HCT116 (cell line): ENCODE measurements at regions of chr4 and their contacts with region 1.

Region 1: DNA sequence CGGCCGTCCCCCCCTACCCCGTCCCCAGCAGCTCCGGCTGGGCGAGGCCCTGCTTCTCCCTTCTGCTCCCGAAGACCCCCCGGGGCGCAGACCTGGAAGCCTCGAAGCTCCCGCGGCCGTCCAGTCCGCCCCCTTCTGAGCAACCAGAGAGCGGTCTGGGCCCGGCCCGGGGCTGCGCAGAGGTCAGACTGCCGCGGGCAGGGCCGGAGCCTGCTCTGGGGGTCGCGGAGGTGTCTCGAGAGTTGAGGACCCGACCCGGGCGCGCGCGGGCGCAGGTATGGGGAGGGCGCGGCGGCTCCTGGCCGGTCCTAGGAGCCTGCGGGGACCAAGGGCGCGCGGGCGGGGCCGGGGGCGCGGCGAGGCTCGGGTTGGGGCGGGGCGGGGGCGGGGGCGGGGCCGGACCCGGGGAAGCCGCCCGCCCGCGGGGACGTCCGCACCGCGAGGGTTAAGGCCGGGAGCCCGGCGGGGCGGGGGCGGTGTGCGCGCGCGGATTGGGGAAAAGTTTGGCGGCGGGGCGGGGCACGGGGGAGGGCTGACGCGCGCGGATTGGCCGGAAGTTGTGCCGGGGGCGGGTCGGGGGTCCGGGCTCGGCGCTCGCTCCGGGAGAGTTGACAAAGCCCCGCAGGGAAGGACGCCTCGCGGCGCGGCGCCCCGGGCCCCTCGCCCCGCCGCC is at the start of gene FGFRL1:
- DNase-seq: peak; percentile 73
- ATAC-seq: peak; percentile 69
- H3K4me3 ChIP-seq: peak within 1 kb of the TSS; percentile 70 to 75
- H3K27ac ChIP-seq: peak within 1 kb of the TSS; percentile 80
- H3K4me1 ChIP-seq: peaks cover 20 to 38% of the 10 kb centered on the region in 2 experiments
- H3K27me3 ChIP-seq: no peaks in the 10 kb centered on the region
- CTCF ChIP-seq: no peak
- POLR2A ChIP-seq: no peak
- RAD21 ChIP-seq: no peak
- total RNA-seq, gene FGFRL1: 91.1 TPM

Region 2: GRCh38 chr4:999882-1000425 is 11.2 kb before region 1 on chr4:
- CTCF ChIA-PET with region 1: no interaction called
- POLR2A ChIA-PET with region 1: no interaction called
- RAD21 ChIA-PET with region 1: no interaction called
- intact Hi-C with region 1: no loop called
- DNase-seq: no peak
- ATAC-seq: no peak
- H3K4me3 ChIP-seq: no peak overlapping the region
- H3K27ac ChIP-seq: no peak overlapping the region
- H3K4me1 ChIP-seq: no peaks in the 10 kb centered on the region; a peak in 1 of 4 replicates
- H3K27me3 ChIP-seq: no peaks in the 10 kb centered on the region
- CTCF ChIP-seq: no peak
- POLR2A ChIP-seq: no peak
- RAD21 ChIP-seq: no peak

Region 3: DNA sequence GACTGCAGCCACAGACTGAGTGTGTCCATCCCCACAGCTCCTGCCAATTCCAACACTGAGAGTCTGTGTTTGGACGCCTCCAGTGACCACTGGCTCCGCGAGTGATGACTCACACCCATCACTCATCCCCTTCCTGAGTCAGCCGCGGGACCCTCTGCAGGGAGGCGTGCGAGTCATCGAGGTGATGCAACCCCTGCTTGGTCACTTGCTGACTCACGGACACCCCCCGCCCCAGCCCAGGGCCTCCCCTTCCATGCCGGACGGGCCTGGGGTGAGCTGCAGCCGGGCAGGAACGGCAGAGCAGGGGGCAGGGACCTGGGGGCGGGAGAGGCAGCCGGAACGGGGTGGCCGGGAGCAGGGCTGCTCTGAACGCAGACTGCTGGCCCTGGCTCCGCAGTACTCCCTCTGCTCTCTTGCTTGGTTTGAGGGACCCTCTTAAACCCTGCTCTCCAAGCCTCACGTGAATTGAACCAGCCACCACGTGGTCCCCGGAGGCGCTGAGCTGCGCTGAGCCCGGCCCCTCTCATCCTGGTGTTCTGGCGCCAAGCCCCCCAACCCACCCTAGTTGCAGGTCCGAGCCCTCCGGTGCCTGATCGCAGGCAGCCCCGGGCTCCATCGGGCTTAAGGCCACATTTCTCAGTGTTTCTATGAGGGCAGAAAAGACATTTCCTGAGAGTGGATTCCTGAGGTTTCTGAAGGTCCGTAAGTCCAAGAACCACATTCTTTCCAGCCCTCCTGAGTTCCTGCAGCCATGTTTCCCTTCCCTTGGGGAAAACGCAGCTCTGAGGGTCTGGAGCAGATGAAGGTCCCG is 32.7 kb after region 1 on chr4:
- CTCF ChIA-PET with region 1: no interaction called
- POLR2A ChIA-PET with region 1: no interaction called
- RAD21 ChIA-PET with region 1: no interaction called
- intact Hi-C with region 1: loop called (anchors 1 kb)
- DNase-seq: peak; percentile 93
- ATAC-seq: peak; percentile 76
- H3K4me3 ChIP-seq: peak overlapping the region; percentile 22 to 56
- H3K27ac ChIP-seq: peak overlapping the region; percentile 79
- H3K4me1 ChIP-seq: peaks cover 56 to 81% of the 10 kb centered on the region in 2 experiments
- H3K27me3 ChIP-seq: no peaks in the 10 kb centered on the region
- CTCF ChIP-seq: no peak
- POLR2A ChIP-seq: no peak
- RAD21 ChIP-seq: no peak

Region 4: GRCh38 chr4:1289207-1290164 is 278.3 kb after region 1 on chr4 and contains the start of gene MAEA:
- CTCF ChIA-PET with region 1: no interaction called
- POLR2A ChIA-PET with region 1: no interaction called
- RAD21 ChIA-PET with region 1: no interaction called
- intact Hi-C with region 1: loop called (anchors 5 kb)
- DNase-seq: peak; percentile 91
- ATAC-seq: peak; percentile 96
- H3K4me3 ChIP-seq: peak within 1 kb of the TSS; percentile 63 to 100
- H3K27ac ChIP-seq: peak within 1 kb of the TSS; percentile 87
- H3K4me1 ChIP-seq: peaks cover 14 to 29% of the 10 kb centered on the region in 2 experiments
- H3K27me3 ChIP-seq: no peaks in the 10 kb centered on the region
- CTCF ChIP-seq: no peak
- POLR2A ChIP-seq: peak; percentile 63
- RAD21 ChIP-seq: no peak
- total RNA-seq, gene MAEA: 88.3 TPM